B cell (primary cell): ENCODE measurements at regions of chr1 and their contacts with region 1.

Region 1: DNA sequence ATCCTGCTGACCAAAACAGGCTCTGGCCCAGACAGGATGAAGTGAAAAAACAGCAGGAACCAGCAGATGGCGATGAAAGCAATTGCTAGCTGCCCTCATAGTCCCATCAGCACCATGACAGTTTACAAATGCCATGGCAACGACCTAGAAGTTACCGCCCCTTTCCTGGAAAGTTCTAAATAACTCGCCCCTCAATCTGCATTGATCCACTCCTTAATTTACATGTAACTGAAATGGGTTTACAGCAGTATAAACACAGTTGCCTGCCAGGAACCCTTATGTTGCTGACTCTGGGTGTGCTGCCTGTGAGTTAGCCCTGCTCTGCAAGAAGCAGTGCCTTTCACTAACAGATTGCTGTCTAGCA is 65.5 kb upstream of the CR1L start:
- DNase-seq: peak; percentile 54
- ATAC-seq: peak; percentile 67
- H3K4me3 ChIP-seq: no peak overlapping the region
- H3K4me3 Mint-ChIP-seq: no peak overlapping the region
- H3K27ac ChIP-seq: no peak overlapping the region
- H3K27ac Mint-ChIP-seq: peak overlapping the region; percentile 28
- H3K4me1 ChIP-seq: no peaks in the 10 kb centered on the region
- H3K4me1 Mint-ChIP-seq: peaks cover 9% of the 10 kb centered on the region
- H3K27me3 ChIP-seq: no peaks in the 10 kb centered on the region
- H3K27me3 Mint-ChIP-seq: no peaks in the 10 kb centered on the region
- CTCF ChIP-seq: peak; percentile 56

Region 2: GRCh38 chr1:207259391-207259790 is 320.0 kb before region 1 on chr1:
- CTCF ChIA-PET with region 1: no interaction called
- POLR2A ChIA-PET with region 1: no interaction called
- intact Hi-C with region 1: no loop called
- DNase-seq: no peak
- ATAC-seq: no peak
- H3K4me3 ChIP-seq: no peak overlapping the region
- H3K4me3 Mint-ChIP-seq: no peak overlapping the region
- H3K27ac ChIP-seq: no peak overlapping the region
- H3K27ac Mint-ChIP-seq: no peak overlapping the region
- H3K4me1 ChIP-seq: peaks cover 10 to 12% of the 10 kb centered on the region in 2 donors
- H3K4me1 Mint-ChIP-seq: peaks cover 20% of the 10 kb centered on the region
- H3K27me3 ChIP-seq: no peaks in the 10 kb centered on the region
- H3K27me3 Mint-ChIP-seq: no peaks in the 10 kb centered on the region
- CTCF ChIP-seq: no peak

Region 3: GRCh38 chr1:207698822-207699483 is 119.5 kb after region 1 on chr1:
- CTCF ChIA-PET with region 1: interaction called, 10 read pairs
- POLR2A ChIA-PET with region 1: no interaction called
- intact Hi-C with region 1: no loop called
- DNase-seq: peak; percentile 38
- ATAC-seq: no peak
- H3K4me3 ChIP-seq: no peak overlapping the region
- H3K4me3 Mint-ChIP-seq: no peak overlapping the region
- H3K27ac ChIP-seq: no peak overlapping the region
- H3K27ac Mint-ChIP-seq: no peak overlapping the region
- H3K4me1 ChIP-seq: no peaks in the 10 kb centered on the region
- H3K4me1 Mint-ChIP-seq: no peaks in the 10 kb centered on the region
- H3K27me3 ChIP-seq: no peaks in the 10 kb centered on the region
- H3K27me3 Mint-ChIP-seq: no peaks in the 10 kb centered on the region
- CTCF ChIP-seq: peak; percentile 65